Activated naive CD4-positive, alpha-beta T cell treated with anti-CD3 and anti-CD28 coated beads for 36 hours (primary cell): ENCODE measurements at regions of chr1 and their contacts with region 1.

Region 1: GRCh38 chr1:94383966-94384408 is 34.2 kb upstream of the ABCD3 start:
- DNase-seq: peak; percentile 48
- H3K4me3 Mint-ChIP-seq: peak overlapping the region; percentile 5
- H3K27ac Mint-ChIP-seq: peak overlapping the region; percentile 85
- H3K4me1 Mint-ChIP-seq: peaks cover 32% of the 10 kb centered on the region
- H3K27me3 Mint-ChIP-seq: peaks cover 4% of the 10 kb centered on the region

Region 2: DNA sequence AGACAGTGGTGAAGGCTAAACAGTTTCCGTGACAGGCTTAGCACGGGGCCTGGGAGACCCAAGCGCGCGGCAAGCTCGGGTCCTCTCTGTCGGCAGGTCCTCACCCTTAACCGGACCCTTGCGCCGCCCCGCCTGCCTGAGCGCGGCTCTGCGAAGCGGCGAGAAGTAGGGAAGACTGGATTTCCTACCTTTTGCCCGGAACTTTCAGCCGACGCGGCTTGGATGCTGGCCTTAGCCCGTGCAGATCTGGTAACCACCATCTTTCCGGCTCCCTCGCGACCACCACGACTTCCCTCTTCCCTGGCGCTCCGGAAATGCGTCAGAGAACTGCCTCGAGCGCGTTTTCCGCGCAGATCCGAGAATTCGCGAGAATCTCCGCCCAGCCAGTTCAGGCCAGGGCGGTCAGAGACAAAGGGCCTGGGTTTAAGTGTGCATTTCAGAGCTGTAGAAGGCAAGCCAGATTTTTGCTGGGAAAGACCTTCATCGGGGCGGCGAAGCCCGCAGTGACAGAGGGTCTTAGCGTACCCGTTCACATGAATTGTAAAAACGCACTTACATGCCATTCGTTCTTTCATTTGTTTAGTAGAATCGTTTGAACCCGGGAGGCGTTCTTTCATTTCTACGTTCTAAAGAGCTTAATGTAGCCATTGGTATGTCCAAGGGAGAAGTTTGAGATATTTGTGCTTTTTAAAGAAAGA is 504.9 kb before region 1 on chr1 and contains the start of gene DNTTIP2:
- CTCF ChIA-PET with region 1: no interaction called
- intact Hi-C with region 1: loop called (anchors 1 kb)
- DNase-seq: peak; percentile 95
- H3K4me3 Mint-ChIP-seq: peak within 1 kb of the TSS; percentile 92
- H3K27ac Mint-ChIP-seq: peak within 1 kb of the TSS; percentile 97
- H3K4me1 Mint-ChIP-seq: peaks cover 42% of the 10 kb centered on the region
- H3K27me3 Mint-ChIP-seq: no peaks in the 10 kb centered on the region
- total RNA-seq, gene DNTTIP2: 58.5 to 64.5 TPM

Region 3: GRCh38 chr1:94025383-94026340 is 358.3 kb before region 1 on chr1:
- CTCF ChIA-PET with region 1: interaction called, 3 read pairs
- intact Hi-C with region 1: loop called (anchors 2 kb)
- DNase-seq: peak; percentile 51
- H3K4me3 Mint-ChIP-seq: no peak overlapping the region
- H3K27ac Mint-ChIP-seq: no peak overlapping the region
- H3K4me1 Mint-ChIP-seq: peaks cover 3% of the 10 kb centered on the region
- H3K27me3 Mint-ChIP-seq: no peaks in the 10 kb centered on the region

Region 4: GRCh38 chr1:94039514-94039870 is 344.5 kb before region 1 on chr1:
- CTCF ChIA-PET with region 1: interaction called, 3 read pairs
- intact Hi-C with region 1: loop called (anchors 1 kb)
- DNase-seq: peak; percentile 74
- H3K4me3 Mint-ChIP-seq: no peak overlapping the region
- H3K27ac Mint-ChIP-seq: no peak overlapping the region
- H3K4me1 Mint-ChIP-seq: peaks cover 15% of the 10 kb centered on the region
- H3K27me3 Mint-ChIP-seq: peaks cover 26% of the 10 kb centered on the region

Region 5: DNA sequence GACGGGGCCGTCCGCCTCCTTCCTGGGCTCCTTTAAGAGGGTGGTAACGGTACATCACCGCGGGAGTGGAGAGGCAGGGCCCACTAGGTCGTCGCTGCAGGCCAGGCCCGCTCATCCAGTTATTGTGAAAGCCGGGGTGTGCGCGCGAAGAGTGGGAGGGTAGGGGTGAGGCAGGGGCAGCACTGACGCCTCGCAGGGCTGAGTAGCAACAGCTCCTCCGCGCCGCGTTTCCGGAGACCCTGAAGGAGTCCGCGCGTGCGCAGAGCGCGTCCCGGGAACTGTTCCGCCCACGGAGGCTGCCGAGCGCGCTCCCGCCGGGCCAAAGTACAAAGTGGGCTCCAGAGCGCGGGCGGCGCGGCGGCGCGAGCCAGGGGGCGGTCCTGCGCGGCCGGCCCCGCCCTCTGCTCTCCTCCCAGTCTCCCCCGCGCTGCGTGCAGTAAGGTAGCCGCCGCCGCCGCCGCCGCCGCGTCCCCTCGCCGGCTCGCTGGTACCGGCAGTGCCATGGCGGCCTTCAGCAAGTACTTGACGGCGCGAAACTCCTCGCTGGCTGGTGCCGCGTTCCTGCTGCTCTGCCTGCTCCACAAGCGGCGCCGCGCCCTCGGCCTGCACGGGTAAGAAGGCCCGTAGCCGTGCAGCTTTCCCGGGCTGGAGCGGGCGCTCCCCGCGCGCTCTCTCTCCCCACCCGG is 34.1 kb after region 1 on chr1 and contains the start of gene ABCD3:
- CTCF ChIA-PET with region 1: interaction called, 4 read pairs
- intact Hi-C with region 1: loop called (anchors 1 kb)
- DNase-seq: peak; percentile 94
- H3K4me3 Mint-ChIP-seq: no peak within 1 kb of the TSS
- H3K27ac Mint-ChIP-seq: peak within 1 kb of the TSS; percentile 43
- H3K4me1 Mint-ChIP-seq: peaks cover 35% of the 10 kb centered on the region
- H3K27me3 Mint-ChIP-seq: no peaks in the 10 kb centered on the region
- total RNA-seq, gene ABCD3: 29.2 to 30.8 TPM